CD4-positive, alpha-beta T cell (primary cell): ENCODE measurements at regions of chr21 and their contacts with region 1.

Region 1: GRCh38 chr21:41283211-41283818 is 33.3 kb upstream of the FAM3B start:
- DNase-seq: peak in 11 of 14 experiments; percentile 6 to 83 (median 35)
- ATAC-seq: peak; percentile 97
- H3K4me3 ChIP-seq: no peak overlapping the region
- H3K4me3 Mint-ChIP-seq: no peak overlapping the region
- H3K27ac ChIP-seq: no peak overlapping the region
- H3K27ac Mint-ChIP-seq: no peak overlapping the region
- H3K4me1 ChIP-seq: no peaks in the 10 kb centered on the region
- H3K4me1 Mint-ChIP-seq: no peaks in the 10 kb centered on the region
- H3K27me3 ChIP-seq: no peaks in the 10 kb centered on the region
- H3K27me3 Mint-ChIP-seq: peaks cover 33% of the 10 kb centered on the region
- CTCF ChIP-seq: peak; percentile 93

Region 2: GRCh38 chr21:41241316-41242035 is 41.8 kb before region 1 on chr21:
- CTCF ChIA-PET with region 1: no interaction called
- POLR2A ChIA-PET with region 1: no interaction called
- intact Hi-C with region 1: no loop called
- DNase-seq: no peak
- ATAC-seq: no peak
- H3K4me3 ChIP-seq: no peak overlapping the region
- H3K4me3 Mint-ChIP-seq: no peak overlapping the region
- H3K27ac ChIP-seq: no peak overlapping the region
- H3K27ac Mint-ChIP-seq: no peak overlapping the region
- H3K4me1 ChIP-seq: no peaks in the 10 kb centered on the region
- H3K4me1 Mint-ChIP-seq: no peaks in the 10 kb centered on the region
- H3K27me3 ChIP-seq: no peaks in the 10 kb centered on the region
- H3K27me3 Mint-ChIP-seq: no peaks in the 10 kb centered on the region
- CTCF ChIP-seq: no peak

Region 3: GRCh38 chr21:41369105-41369919 is 86.0 kb after region 1 on chr21:
- CTCF ChIA-PET with region 1: interaction called, 9 read pairs
- POLR2A ChIA-PET with region 1: interaction called, 19 read pairs
- intact Hi-C with region 1: loop called (anchors 1 to 5 kb)
- DNase-seq: peak in 12 of 14 experiments; percentile 23 to 69 (median 35)
- ATAC-seq: peak; percentile 82
- H3K4me3 ChIP-seq: peak overlapping the region; percentile 61
- H3K4me3 Mint-ChIP-seq: peak overlapping the region; percentile 88
- H3K27ac ChIP-seq: peak overlapping the region; percentile 81
- H3K27ac Mint-ChIP-seq: peak overlapping the region; percentile 98
- H3K4me1 ChIP-seq: peaks cover 72% of the 10 kb centered on the region
- H3K4me1 Mint-ChIP-seq: peaks cover 87% of the 10 kb centered on the region
- H3K27me3 ChIP-seq: no peaks in the 10 kb centered on the region
- H3K27me3 Mint-ChIP-seq: no peaks in the 10 kb centered on the region
- CTCF ChIP-seq: no peak

Region 4: GRCh38 chr21:41425954-41426675 is 142.8 kb after region 1 on chr21 and contains the start of gene MX1:
- CTCF ChIA-PET with region 1: interaction called, 16 read pairs
- POLR2A ChIA-PET with region 1: interaction called, 10 read pairs
- intact Hi-C with region 1: no loop called
- DNase-seq: peak; percentile 84 to 99 (median 89)
- ATAC-seq: peak; percentile 98
- H3K4me3 ChIP-seq: peak within 1 kb of the TSS; percentile 96
- H3K4me3 Mint-ChIP-seq: peak within 1 kb of the TSS; percentile 99
- H3K27ac ChIP-seq: peak within 1 kb of the TSS; percentile 30 to 62
- H3K27ac Mint-ChIP-seq: peak within 1 kb of the TSS; percentile 95
- H3K4me1 ChIP-seq: peaks cover 28% of the 10 kb centered on the region
- H3K4me1 Mint-ChIP-seq: peaks cover 70% of the 10 kb centered on the region
- H3K27me3 ChIP-seq: no peaks in the 10 kb centered on the region
- H3K27me3 Mint-ChIP-seq: no peaks in the 10 kb centered on the region
- CTCF ChIP-seq: no peak
- total RNA-seq, gene MX1: 82.3 to 86.3 TPM

Region 5: DNA sequence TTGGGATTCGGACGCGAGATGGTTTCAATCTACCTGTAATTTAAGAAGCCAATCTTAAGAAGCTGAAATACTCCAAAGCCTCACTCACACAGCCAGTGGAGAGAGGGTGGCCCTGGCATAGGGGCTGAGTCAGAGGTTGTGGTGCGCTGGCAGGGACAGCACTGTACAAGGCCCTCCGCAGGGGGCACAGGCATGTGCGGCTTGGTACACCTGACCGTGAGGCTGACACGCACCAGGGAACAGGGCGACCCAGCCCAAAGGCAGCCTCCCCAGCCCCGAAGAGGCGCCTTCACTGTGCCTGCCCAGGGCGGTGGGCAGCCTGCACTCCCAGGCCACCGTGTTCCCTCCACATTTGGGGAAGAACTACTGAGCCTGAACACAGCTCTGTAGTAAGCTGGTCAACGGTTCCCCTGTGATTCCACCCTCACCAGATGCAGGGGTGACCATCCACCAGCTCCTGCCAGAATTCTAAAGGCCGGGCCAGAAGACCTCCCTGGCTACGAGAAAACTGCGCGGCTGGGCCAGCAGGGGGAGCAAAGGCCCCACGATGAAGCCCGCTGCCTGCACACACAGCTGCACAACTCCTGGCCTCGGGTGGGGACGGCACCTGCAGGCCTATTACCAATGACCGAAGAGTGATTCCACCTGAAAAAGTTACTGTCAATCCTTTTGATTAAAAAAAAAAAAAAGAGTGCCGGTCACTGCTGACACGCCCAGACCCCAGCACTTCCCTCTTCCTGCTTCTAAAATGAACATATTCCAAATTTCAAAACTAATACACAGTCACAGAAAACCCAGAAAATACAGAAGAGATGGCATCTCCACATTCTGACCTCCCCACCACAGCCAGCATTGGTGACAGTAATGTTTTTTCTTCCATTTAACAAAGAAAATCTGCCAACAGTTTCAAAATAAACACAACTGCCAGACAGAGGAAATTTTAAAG is 533.2 kb after region 1 on chr21:
- CTCF ChIA-PET with region 1: interaction called, 9 read pairs
- POLR2A ChIA-PET with region 1: interaction called, 5 read pairs
- intact Hi-C with region 1: loop called (anchors 1 to 2 kb)
- DNase-seq: peak; percentile 44 to 77 (median 53)
- ATAC-seq: peak; percentile 80
- H3K4me3 ChIP-seq: no peak overlapping the region
- H3K4me3 Mint-ChIP-seq: no peak overlapping the region
- H3K27ac ChIP-seq: no peak overlapping the region
- H3K27ac Mint-ChIP-seq: no peak overlapping the region
- H3K4me1 ChIP-seq: peaks cover 4% of the 10 kb centered on the region
- H3K4me1 Mint-ChIP-seq: no peaks in the 10 kb centered on the region
- H3K27me3 ChIP-seq: no peaks in the 10 kb centered on the region
- H3K27me3 Mint-ChIP-seq: no peaks in the 10 kb centered on the region
- CTCF ChIP-seq: peak; percentile 71